Mammary epithelial cell (primary cell): ENCODE measurements at regions of chr16 and their contacts with region 1.

Region 1: DNA sequence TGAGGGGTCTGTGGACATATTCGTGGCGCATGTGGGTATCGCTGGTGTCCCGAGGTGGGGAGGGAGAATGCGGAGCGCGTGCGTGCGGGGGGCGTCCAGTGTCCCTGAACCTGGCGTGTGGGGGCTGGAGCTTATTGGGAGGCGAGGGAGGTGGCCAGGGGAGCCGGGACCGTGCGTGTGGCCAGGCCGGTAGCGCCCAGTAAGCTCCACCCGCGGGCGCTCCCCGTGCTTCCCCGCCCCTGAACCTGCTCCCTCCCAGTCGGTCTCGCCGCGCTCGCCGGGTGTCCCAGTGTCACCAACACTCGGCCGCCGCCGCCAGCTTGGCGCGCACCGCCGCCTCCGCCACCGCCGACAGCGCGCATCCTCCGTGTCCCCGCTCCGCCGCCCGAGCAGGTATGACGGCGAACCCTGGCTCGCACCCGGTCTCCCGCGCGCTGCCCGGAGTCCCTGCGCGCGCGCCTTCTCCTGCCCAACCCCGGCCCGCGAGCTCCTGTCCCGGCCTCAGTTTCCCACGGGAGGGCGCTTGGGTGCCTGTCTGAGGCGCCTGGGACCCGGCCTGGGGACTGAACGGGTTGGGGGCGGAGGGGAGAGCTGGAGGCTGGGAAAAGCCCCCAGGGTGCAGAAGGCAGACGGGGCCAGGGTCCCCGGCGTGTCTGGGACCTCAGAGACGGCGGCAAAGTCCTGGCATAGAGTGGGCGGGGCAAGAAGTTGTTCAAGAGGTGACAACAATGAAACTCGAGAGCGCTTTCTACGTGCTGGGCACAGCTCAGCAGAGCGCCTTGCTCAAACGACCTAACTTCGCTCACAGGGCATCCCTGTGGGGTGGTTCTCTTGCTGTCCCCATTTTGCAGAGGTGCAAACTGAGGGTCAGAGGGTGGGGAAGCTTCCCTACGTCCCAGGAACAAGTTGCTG is at the start of gene SCNN1B:
- DNase-seq: no peak
- H3K4me3 ChIP-seq: peak within 1 kb of the TSS; percentile 45 to 48 (median 45)
- H3K27ac ChIP-seq: no peak within 1 kb of the TSS
- H3K4me1 ChIP-seq: peaks cover 9% of the 10 kb centered on the region
- H3K27me3 ChIP-seq: peaks cover 10% of the 10 kb centered on the region
- CTCF ChIP-seq: no peak
- total RNA-seq, gene SCNN1B: 0.80 to 3.0 TPM

Region 2: DNA sequence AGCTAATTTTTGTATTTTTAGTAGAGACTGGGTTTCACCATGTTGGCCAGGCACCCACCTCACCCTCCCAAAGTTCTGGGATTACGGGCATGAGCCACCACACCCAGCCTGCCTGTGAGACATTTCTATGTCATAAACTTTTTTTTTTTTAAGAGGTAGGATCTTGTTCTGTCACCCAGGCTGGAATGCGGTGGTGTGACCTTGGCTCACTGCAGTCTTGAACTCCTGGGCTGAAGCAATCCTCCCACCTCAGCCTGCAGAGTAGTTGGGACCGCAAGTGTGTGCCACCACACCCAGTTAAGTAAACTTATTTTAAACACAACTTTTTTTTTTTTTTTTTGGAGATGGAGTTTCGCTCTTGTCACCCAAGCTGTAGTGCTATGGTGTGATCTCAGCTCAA is 72.6 kb before region 1 on chr16:
- CTCF ChIA-PET with region 1: interaction called, 12 read pairs
- dilution Hi-C with region 1: no loop called
- in situ Hi-C with region 1: no loop called
- intact Hi-C with region 1: no loop called
- DNase-seq: no peak
- H3K4me3 ChIP-seq: no peak overlapping the region
- H3K27ac ChIP-seq: no peak overlapping the region
- H3K4me1 ChIP-seq: no peaks in the 10 kb centered on the region
- H3K27me3 ChIP-seq: no peaks in the 10 kb centered on the region
- CTCF ChIP-seq: no peak